ENCODE measurements at regions of chr11 and their contacts with region 1.

Region 1: DNA sequence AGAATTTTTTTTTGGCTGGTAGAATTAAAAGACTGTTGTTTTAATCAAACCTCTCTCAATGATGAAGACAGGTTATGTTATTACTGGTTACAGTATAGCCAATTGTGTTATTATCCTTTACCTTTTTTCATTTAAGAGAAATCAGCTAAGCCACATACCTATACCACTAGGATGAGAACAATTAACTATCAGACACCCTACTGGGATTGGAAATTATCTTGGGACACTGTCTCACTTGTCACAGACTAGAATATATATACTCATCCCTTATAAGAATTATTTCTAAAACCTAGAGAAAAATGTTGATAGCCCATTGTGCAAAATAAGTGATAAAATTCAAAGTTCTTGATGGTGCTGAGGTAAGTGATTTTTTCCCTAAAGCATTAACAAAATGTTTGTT is at the start of gene OR5AS1:
- DNase-seq: no peak
- ATAC-seq: no peak
- H3K4me3 ChIP-seq: no peak within 1 kb of the TSS
- H3K4me3 Mint-ChIP-seq: no peak within 1 kb of the TSS
- H3K27ac ChIP-seq: no peak within 1 kb of the TSS
- H3K27ac Mint-ChIP-seq: no peak within 1 kb of the TSS
- H3K4me1 ChIP-seq: no peaks in the 10 kb centered on the region
- H3K4me1 Mint-ChIP-seq: no peaks in the 10 kb centered on the region
- H3K27me3 ChIP-seq: no peaks in the 10 kb centered on the region
- H3K27me3 Mint-ChIP-seq: no peaks in the 10 kb centered on the region
- total RNA-seq, gene OR5AS1: not detected

Region 2: GRCh38 chr11:55970935-55971334 is 56.4 kb before region 1 on chr11:
- CTCF ChIA-PET with region 1: no interaction called
- POLR2A ChIA-PET with region 1: no interaction called
- intact Hi-C with region 1: loop called in 1 of 2 experiments (anchors 10 kb)
- DNase-seq: no peak
- ATAC-seq: no peak
- H3K4me3 ChIP-seq: no peak overlapping the region
- H3K4me3 Mint-ChIP-seq: no peak overlapping the region
- H3K27ac ChIP-seq: no peak overlapping the region
- H3K27ac Mint-ChIP-seq: no peak overlapping the region
- H3K4me1 ChIP-seq: no peaks in the 10 kb centered on the region
- H3K4me1 Mint-ChIP-seq: no peaks in the 10 kb centered on the region
- H3K27me3 ChIP-seq: no peaks in the 10 kb centered on the region
- H3K27me3 Mint-ChIP-seq: no peaks in the 10 kb centered on the region

Region 3: DNA sequence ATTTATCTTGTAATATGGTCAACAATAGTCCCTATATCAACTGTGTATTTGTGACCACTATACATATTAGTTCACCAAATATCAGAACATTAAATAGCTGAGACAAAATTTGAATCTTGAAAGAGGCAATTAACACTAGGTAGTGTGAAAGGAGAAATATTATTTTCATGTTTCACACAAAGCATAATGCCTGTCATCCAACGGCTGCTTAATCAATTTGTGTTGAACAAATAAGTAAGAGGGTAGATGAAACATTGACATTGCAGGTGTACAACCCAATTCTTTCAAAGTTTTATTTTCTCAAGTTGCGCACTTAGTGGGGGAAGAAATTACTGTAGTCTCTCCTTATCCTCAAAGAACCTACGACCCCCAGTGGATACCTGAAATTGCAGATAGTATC is 62.3 kb after region 1 on chr11:
- CTCF ChIA-PET with region 1: no interaction called
- POLR2A ChIA-PET with region 1: no interaction called
- intact Hi-C with region 1: loop called in 1 of 2 experiments (anchors 10 kb)
- DNase-seq: no peak
- ATAC-seq: no peak
- H3K4me3 ChIP-seq: no peak overlapping the region
- H3K4me3 Mint-ChIP-seq: no peak overlapping the region
- H3K27ac ChIP-seq: no peak overlapping the region
- H3K27ac Mint-ChIP-seq: no peak overlapping the region
- H3K4me1 ChIP-seq: no peaks in the 10 kb centered on the region
- H3K4me1 Mint-ChIP-seq: no peaks in the 10 kb centered on the region
- H3K27me3 ChIP-seq: no peaks in the 10 kb centered on the region
- H3K27me3 Mint-ChIP-seq: no peaks in the 10 kb centered on the region